ENCODE measurements at regions of chr12 and their contacts with region 1.

Region 1: GRCh38 chr12:85424581-85425348 is 144.7 kb downstream of the ALX1 start:
- DNase-seq: peak; percentile 51
- H3K4me3 ChIP-seq: no peak overlapping the region
- H3K27ac ChIP-seq: peak overlapping the region in 1 of 4 donors; percentile 26
- H3K4me1 ChIP-seq: peaks cover 0 to 12% (median 0%) of the 10 kb centered on the region in 4 donors
- H3K27me3 ChIP-seq: peaks cover 3% of the 10 kb centered on the region
- CTCF ChIP-seq: peak; percentile 45 to 72 (median 56)
- EP300 ChIP-seq: no peak
- POLR2A ChIP-seq: no peak

Region 2: DNA sequence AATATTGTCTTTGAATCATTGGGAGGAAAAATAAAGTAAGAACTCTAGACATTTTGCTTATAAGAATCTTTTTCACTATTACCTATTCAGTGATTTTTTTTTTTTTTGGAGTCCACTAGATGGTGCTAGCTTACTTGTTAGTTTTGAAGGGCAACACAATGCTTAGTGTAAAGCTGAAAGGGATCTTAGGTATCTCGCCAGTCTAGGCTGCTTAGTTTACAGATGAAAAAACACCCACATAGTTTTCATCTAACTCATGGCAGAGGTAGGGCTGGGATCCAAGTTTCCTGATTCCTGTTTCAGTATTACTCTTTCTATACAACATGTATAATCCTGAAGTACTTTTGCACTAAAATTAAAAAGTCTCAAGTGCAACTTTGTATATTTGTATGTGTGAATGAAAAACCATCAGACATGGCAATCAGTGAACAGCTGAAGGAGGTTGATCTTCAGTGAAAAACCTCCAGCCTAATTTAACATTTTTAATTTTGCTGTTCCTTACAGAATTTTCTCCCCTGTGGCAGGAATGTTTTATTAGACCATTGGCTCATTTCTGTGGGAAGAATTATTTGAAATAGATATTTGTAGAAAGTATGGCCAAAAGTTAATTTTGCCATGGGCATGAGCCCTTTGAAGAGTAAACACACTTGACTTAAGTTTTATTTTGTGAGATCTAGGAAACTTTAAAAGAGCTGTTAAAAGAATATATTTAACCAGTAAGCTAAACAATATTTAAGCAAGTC is 347.9 kb before region 1 on chr12:
- in situ Hi-C with region 1: loop called in 1 of 4 experiments (anchors 25 kb)
- intact Hi-C with region 1: no loop called
- DNase-seq: no peak
- H3K4me3 ChIP-seq: no peak overlapping the region
- H3K27ac ChIP-seq: no peak overlapping the region
- H3K4me1 ChIP-seq: no peaks in the 10 kb centered on the region
- H3K27me3 ChIP-seq: no peaks in the 10 kb centered on the region
- CTCF ChIP-seq: peak in 4 of 5 experiments; percentile 13 to 21 (median 18)
- EP300 ChIP-seq: no peak
- POLR2A ChIP-seq: no peak

Measured in transverse colon (tissue), 4 donors.